ENCODE measurements at regions of chr2 and their contacts with region 1.

Region 1: GRCh38 chr2:196836440-196836839 is 27.3 kb upstream of the C2orf66 start:
- DNase-seq: peak; percentile 81
- ATAC-seq: peak; percentile 88
- H3K4me3 ChIP-seq: no peak overlapping the region
- H3K27ac ChIP-seq: no peak overlapping the region; the same call in 1 of the 2 replicates
- H3K4me1 ChIP-seq: peaks cover 18% of the 10 kb centered on the region
- H3K27me3 ChIP-seq: no peaks in the 10 kb centered on the region
- CTCF ChIP-seq: no peak

Region 2: DNA sequence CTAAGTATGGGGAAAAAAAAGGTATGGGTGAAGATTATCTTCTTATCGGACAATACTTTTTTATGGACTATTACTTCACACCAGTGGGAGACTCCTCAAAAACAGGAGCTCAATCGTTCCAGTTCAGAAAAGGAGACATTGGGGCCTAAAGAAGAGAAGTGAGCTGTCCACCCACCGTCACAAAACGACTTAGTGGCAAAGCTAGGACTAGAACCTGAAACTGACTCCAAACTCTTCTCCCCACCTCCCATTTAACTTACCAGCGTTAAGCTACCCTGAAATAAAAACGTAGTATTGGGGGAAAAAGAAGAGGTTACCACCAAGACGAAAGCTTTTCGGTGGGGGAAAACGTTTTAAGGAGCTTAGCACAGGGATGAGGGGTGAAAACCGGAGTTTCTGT is 37.5 kb before region 1 on chr2:
- CTCF ChIA-PET with region 1: no interaction called
- POLR2A ChIA-PET with region 1: no interaction called
- intact Hi-C with region 1: loop called (anchors 1 kb)
- DNase-seq: no peak
- ATAC-seq: no peak
- H3K4me3 ChIP-seq: peak overlapping the region; percentile 94
- H3K27ac ChIP-seq: peak overlapping the region; percentile 21; the same call in 1 of the 2 replicates
- H3K4me1 ChIP-seq: peaks cover 21% of the 10 kb centered on the region
- H3K27me3 ChIP-seq: no peaks in the 10 kb centered on the region
- CTCF ChIP-seq: no peak

Region 3: DNA sequence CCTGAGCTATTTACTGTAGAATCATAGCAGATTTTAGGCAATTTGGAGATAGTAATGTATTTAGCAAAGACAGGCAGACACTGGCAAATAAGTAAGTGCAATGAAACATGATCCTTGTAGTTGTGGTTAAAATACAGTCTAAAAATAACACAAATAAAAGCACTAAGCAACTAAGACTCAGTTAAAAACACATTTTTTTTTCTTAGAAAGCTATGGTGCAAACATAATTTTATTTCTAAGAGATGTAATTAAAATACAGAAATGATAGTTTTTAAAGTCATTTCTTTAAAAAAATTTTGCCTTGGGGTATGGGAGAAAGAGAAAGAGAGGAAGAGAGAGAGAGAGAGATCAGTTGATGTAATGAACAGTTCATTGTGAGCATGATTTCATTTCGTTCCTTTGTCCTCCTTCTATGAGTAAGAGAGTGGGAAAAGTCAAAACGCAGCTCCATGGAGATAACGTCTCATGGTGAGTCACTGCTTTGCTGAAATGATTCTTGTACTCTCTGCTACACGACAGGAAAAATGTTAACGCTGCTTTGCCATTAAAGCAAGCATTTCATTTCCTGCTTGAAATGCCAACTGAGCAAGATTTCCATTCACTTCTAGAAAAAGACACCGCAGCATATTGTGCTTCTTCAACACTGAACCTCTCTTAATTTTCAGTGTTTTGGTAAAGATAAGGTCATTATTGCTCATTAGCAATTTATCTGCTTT is 151.4 kb after region 1 on chr2:
- CTCF ChIA-PET with region 1: no interaction called
- POLR2A ChIA-PET with region 1: no interaction called
- intact Hi-C with region 1: loop called (anchors 10 kb)
- DNase-seq: peak; percentile 95
- ATAC-seq: peak; percentile 96
- H3K4me3 ChIP-seq: peak overlapping the region; percentile 52
- H3K27ac ChIP-seq: peak overlapping the region; percentile 94
- H3K4me1 ChIP-seq: peaks cover 26% of the 10 kb centered on the region
- H3K27me3 ChIP-seq: no peaks in the 10 kb centered on the region
- CTCF ChIP-seq: no peak

Region 4: GRCh38 chr2:197219636-197220035 is 383.2 kb after region 1 on chr2:
- CTCF ChIA-PET with region 1: no interaction called
- POLR2A ChIA-PET with region 1: no interaction called
- intact Hi-C with region 1: no loop called
- DNase-seq: no peak
- ATAC-seq: no peak
- H3K4me3 ChIP-seq: no peak overlapping the region
- H3K27ac ChIP-seq: no peak overlapping the region
- H3K4me1 ChIP-seq: peaks cover 9% of the 10 kb centered on the region
- H3K27me3 ChIP-seq: no peaks in the 10 kb centered on the region
- CTCF ChIP-seq: no peak

Measured in PC-3 (cell line).